Activated B cell treated with CpG ODN at 0.5 μM for 24 hours (primary cell): ENCODE measurements at regions of chr2 and their contacts with region 1.

Region 1: GRCh38 chr2:174341286-174341994 is 6.7 kb downstream of the SP9 start:
- DNase-seq: peak; percentile 82
- ATAC-seq: peak; percentile 73
- H3K4me3 Mint-ChIP-seq: peak overlapping the region; percentile 80
- H3K27ac Mint-ChIP-seq: peak overlapping the region; percentile 81
- H3K4me1 Mint-ChIP-seq: peaks cover 39% of the 10 kb centered on the region
- H3K27me3 Mint-ChIP-seq: peaks cover 47% of the 10 kb centered on the region
- CTCF ChIP-seq: peak; percentile 86

Region 2: DNA sequence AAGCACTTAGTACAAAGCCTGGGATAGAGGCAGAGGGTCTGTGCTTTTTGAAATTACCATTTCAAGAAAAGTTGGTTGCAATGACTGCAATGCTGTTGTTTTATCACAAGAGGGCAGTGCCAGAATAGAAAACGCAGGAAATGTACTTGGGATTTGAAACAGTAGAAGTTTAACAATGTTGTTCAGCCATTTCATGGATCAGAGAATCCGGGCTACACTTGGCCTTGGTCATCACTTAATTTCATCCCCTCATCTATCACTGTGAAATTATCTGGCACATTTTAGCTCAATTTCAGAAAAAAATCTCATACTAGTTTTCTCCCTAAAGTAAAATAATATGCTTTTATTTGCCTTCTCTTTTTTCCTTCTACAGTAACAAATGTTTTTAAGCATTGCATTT is 1534.9 kb before region 1 on chr2:
- CTCF ChIA-PET with region 1: no interaction called
- POLR2A ChIA-PET with region 1: no interaction called
- intact Hi-C with region 1: loop called (anchors 2 kb)
- DNase-seq: no peak
- ATAC-seq: no peak
- H3K4me3 Mint-ChIP-seq: no peak overlapping the region
- H3K27ac Mint-ChIP-seq: no peak overlapping the region
- H3K4me1 Mint-ChIP-seq: no peaks in the 10 kb centered on the region
- H3K27me3 Mint-ChIP-seq: peaks cover 12% of the 10 kb centered on the region
- CTCF ChIP-seq: no peak

Region 3: DNA sequence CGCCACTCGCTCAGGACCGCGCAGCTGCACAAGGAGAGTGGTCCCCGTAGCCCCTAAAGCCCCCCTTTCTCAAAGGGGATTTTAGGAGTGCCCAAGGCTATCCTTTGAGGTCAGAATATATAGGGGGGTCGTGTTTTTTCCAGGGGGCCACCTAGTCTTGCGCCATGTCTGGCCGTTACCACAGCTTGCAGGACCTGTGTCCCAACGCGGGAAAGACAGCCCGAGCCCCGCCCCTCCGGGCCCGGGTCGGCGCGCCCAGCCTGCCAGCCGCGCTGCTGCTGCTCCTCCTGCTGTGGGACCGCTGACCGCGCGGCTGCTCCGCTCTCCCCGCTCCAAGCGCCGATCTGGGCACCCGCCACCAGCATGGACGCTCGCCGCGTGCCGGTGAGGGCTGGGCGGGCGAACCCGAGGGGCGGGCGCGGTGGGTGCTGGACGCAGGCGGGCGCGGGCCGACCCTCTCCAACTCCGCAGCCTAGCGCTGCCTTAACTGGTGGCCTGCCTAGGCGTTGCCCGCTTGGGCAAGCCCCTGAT is 986.8 kb before region 1 on chr2 and contains the start of gene CDCA7:
- CTCF ChIA-PET with region 1: no interaction called
- POLR2A ChIA-PET with region 1: no interaction called
- intact Hi-C with region 1: loop called (anchors 2 kb)
- DNase-seq: peak; percentile 49
- ATAC-seq: peak; percentile 72
- H3K4me3 Mint-ChIP-seq: peak within 1 kb of the TSS; percentile 87
- H3K27ac Mint-ChIP-seq: no peak within 1 kb of the TSS
- H3K4me1 Mint-ChIP-seq: peaks cover 29% of the 10 kb centered on the region
- H3K27me3 Mint-ChIP-seq: peaks cover 22% of the 10 kb centered on the region
- CTCF ChIP-seq: no peak
- total RNA-seq, gene CDCA7: 4.9 and 6.3 TPM in 2 replicates

Region 4: GRCh38 chr2:173720306-173720705 is 621.1 kb before region 1 on chr2:
- CTCF ChIA-PET with region 1: no interaction called
- POLR2A ChIA-PET with region 1: no interaction called
- intact Hi-C with region 1: no loop called
- DNase-seq: no peak
- ATAC-seq: no peak
- H3K4me3 Mint-ChIP-seq: no peak overlapping the region
- H3K27ac Mint-ChIP-seq: no peak overlapping the region
- H3K4me1 Mint-ChIP-seq: no peaks in the 10 kb centered on the region
- H3K27me3 Mint-ChIP-seq: peaks cover 49% of the 10 kb centered on the region
- CTCF ChIP-seq: no peak

Region 5: GRCh38 chr2:173884025-173884802 is 457.2 kb before region 1 on chr2:
- CTCF ChIA-PET with region 1: interaction called, 4 read pairs
- POLR2A ChIA-PET with region 1: no interaction called
- intact Hi-C with region 1: loop called (anchors 2 kb)
- DNase-seq: no peak
- ATAC-seq: peak; percentile 50
- H3K4me3 Mint-ChIP-seq: no peak overlapping the region
- H3K27ac Mint-ChIP-seq: no peak overlapping the region
- H3K4me1 Mint-ChIP-seq: peaks cover 2% of the 10 kb centered on the region
- H3K27me3 Mint-ChIP-seq: peaks cover 11% of the 10 kb centered on the region
- CTCF ChIP-seq: no peak

Region 6: DNA sequence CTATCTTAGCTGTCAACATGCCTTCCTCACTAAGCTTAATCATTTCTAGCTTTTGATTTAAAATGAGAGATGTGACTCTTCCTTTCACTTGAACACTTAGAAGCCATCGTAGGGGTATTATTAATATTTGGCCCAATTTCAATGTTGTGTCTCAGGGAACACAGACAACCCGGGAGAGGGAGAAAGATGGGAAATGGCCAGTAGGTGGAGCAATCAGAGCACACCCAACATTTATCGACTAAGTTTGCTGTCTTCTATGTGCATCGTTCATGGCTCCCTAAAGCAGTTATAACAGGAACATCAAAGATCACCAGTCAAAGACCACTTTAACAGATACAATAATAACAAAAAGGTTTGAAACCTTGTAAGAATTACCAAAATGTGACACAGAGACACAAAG is 203.3 kb before region 1 on chr2:
- CTCF ChIA-PET with region 1: interaction called, 6 read pairs
- POLR2A ChIA-PET with region 1: no interaction called
- intact Hi-C with region 1: loop called (anchors 1 kb)
- DNase-seq: no peak
- ATAC-seq: no peak
- H3K4me3 Mint-ChIP-seq: no peak overlapping the region
- H3K27ac Mint-ChIP-seq: no peak overlapping the region
- H3K4me1 Mint-ChIP-seq: no peaks in the 10 kb centered on the region
- H3K27me3 Mint-ChIP-seq: no peaks in the 10 kb centered on the region
- CTCF ChIP-seq: no peak

Region 7: GRCh38 chr2:174487820-174488162 is 146.4 kb after region 1 on chr2:
- CTCF ChIA-PET with region 1: no interaction called
- POLR2A ChIA-PET with region 1: no interaction called
- intact Hi-C with region 1: no loop called
- DNase-seq: no peak
- ATAC-seq: no peak
- H3K4me3 Mint-ChIP-seq: peak overlapping the region; percentile 96
- H3K27ac Mint-ChIP-seq: no peak overlapping the region
- H3K4me1 Mint-ChIP-seq: peaks cover 44% of the 10 kb centered on the region
- H3K27me3 Mint-ChIP-seq: no peaks in the 10 kb centered on the region
- CTCF ChIP-seq: no peak

Region 8: DNA sequence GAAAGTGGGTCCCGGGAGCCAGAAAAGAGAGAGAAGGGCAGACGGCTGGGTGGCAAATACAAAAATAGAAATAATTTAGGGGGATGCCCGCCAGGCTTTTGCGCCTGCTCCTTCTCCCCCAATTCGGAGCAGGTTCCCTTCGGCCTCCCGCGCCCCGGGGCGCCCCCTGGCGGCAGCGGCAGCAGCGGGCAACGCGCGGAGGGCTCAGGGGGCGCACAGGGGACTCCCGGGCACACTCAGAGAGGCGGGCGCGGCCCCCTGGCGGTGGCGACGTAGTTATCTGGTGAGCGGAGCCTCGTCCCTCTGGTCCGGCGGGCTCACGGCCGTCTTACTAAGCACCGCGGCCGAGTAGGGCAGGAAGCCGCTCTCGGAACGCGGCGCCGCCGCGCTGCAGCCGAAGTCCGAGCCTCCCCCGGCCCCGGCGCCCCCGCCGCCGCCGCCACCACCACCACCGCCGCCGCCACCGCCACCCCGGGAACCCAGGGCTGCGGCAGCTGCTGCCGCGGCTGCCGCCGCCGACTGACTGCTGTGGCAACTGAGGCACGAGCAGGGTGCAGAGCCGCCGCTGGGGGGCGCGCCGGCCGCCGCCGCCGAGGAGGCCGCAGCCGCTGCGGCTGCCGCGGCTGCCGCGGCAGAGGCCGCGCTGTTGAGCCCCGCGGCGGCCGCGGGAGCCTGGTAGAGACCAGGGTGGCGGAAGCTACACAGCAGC is 1738.5 kb after region 1 on chr2:
- CTCF ChIA-PET with region 1: no interaction called
- POLR2A ChIA-PET with region 1: no interaction called
- intact Hi-C with region 1: loop called (anchors 5 kb)
- DNase-seq: no peak
- ATAC-seq: no peak
- H3K4me3 Mint-ChIP-seq: peak overlapping the region; percentile 53
- H3K27ac Mint-ChIP-seq: peak overlapping the region; percentile 66
- H3K4me1 Mint-ChIP-seq: peaks cover 7% of the 10 kb centered on the region
- H3K27me3 Mint-ChIP-seq: peaks cover 65% of the 10 kb centered on the region
- CTCF ChIP-seq: no peak